ENCODE measurements at regions of chr10 and their contacts with region 1.

Region 1: DNA sequence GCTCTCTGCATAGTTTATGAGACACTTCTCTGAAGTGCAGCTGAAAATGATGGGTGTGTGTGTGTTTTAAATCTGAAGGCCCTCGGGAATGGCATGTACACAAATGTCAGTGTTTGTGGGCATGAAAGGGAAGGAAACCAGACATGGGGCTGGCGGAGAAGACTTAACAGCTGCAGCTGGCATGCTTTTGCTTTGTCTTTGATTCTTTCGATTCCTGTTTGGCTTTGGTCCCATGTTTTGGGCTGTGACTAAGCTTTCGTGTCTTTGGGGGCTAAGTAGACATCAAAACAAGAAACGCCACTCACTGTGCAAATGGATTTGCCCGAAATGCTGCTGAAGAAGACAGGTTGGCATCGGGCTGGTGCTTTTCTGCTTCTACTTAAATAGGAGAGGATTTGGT is 179.3 kb downstream of the PFKFB3 start:
- DNase-seq: peak in 8 of 9 experiments; percentile 20 to 71 (median 54)
- ATAC-seq: peak; percentile 89
- H3K4me3 ChIP-seq: peak overlapping the region in 1 of 2 experiments; percentile 12
- H3K4me3 Mint-ChIP-seq: peak overlapping the region; percentile 74
- H3K27ac ChIP-seq: no peak overlapping the region
- H3K27ac Mint-ChIP-seq: peak overlapping the region; percentile 73
- H3K4me1 ChIP-seq: peaks cover 15% of the 10 kb centered on the region
- H3K4me1 Mint-ChIP-seq: peaks cover 24% of the 10 kb centered on the region
- H3K27me3 ChIP-seq: no peaks in the 10 kb centered on the region
- H3K27me3 Mint-ChIP-seq: no peaks in the 10 kb centered on the region
- CTCF ChIP-seq: no peak

Region 2: GRCh38 chr10:6364893-6365292 is 17.2 kb before region 1 on chr10:
- CTCF ChIA-PET with region 1: interaction called, 5 read pairs
- POLR2A ChIA-PET with region 1: interaction called, 4 read pairs
- intact Hi-C with region 1: loop called in 1 of 2 experiments (anchors 1 kb)
- DNase-seq: no peak
- ATAC-seq: no peak
- H3K4me3 ChIP-seq: no peak overlapping the region
- H3K4me3 Mint-ChIP-seq: no peak overlapping the region
- H3K27ac ChIP-seq: no peak overlapping the region
- H3K27ac Mint-ChIP-seq: no peak overlapping the region
- H3K4me1 ChIP-seq: no peaks in the 10 kb centered on the region
- H3K4me1 Mint-ChIP-seq: no peaks in the 10 kb centered on the region
- H3K27me3 ChIP-seq: no peaks in the 10 kb centered on the region
- H3K27me3 Mint-ChIP-seq: no peaks in the 10 kb centered on the region
- CTCF ChIP-seq: no peak

Region 3: DNA sequence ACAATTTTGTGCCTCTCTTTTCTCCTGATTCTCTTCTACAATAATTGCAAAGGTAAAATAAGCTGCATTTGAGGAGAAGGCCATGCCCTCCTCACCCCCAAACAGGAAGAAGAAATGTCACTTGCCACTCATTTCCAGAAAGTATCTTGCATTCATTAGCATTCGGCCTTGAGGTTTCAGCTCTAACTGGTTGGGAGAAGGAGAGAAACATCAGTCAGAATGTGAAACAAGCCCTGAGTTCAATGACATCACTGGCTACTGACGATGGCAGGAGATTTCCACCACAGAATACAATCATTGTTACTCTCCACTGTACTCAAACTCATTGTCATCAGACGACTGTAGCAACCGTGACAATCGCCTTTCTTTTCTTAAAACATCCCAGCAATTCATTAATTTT is 125.2 kb after region 1 on chr10:
- CTCF ChIA-PET with region 1: no interaction called
- POLR2A ChIA-PET with region 1: no interaction called
- intact Hi-C with region 1: no loop called
- DNase-seq: peak in 2 of 9 experiments; percentile 47 to 75
- ATAC-seq: peak; percentile 75
- H3K4me3 ChIP-seq: no peak overlapping the region
- H3K4me3 Mint-ChIP-seq: no peak overlapping the region
- H3K27ac ChIP-seq: peak overlapping the region; percentile 7 to 69
- H3K27ac Mint-ChIP-seq: peak overlapping the region; percentile 80
- H3K4me1 ChIP-seq: no peaks in the 10 kb centered on the region
- H3K4me1 Mint-ChIP-seq: peaks cover 37% of the 10 kb centered on the region
- H3K27me3 ChIP-seq: no peaks in the 10 kb centered on the region
- H3K27me3 Mint-ChIP-seq: no peaks in the 10 kb centered on the region
- CTCF ChIP-seq: no peak

Measured in CD8-positive, alpha-beta T cell (primary cell).